ENCODE measurements at regions of chrX and their contacts with region 1.

Region 1: GRCh38 chrX:54529552-54530357 is at the start of gene GNL3L:
- DNase-seq: peak; percentile 86 to 92 (median 89)
- ATAC-seq: peak; percentile 90 to 97 (median 94)
- H3K4me3 ChIP-seq: peak within 1 kb of the TSS; percentile 39 to 97 (median 72)
- H3K27ac ChIP-seq: peak within 1 kb of the TSS; percentile 80 to 97 (median 84)
- H3K4me1 ChIP-seq: peaks cover 0 to 18% (median 4%) of the 10 kb centered on the region in 12 donors
- H3K27me3 ChIP-seq: peaks cover 0 to 4% (median 0%) of the 10 kb centered on the region in 9 donors
- CTCF ChIP-seq: no peak
- POLR2A ChIP-seq: peak in 1 of 2 donors; percentile 55
- total RNA-seq, gene GNL3L: 27.1 to 44.2 (median 37.4) TPM

Region 2: GRCh38 chrX:54134269-54134668 is 395.5 kb before region 1 on chrX:
- intact Hi-C with region 1: no loop called
- DNase-seq: no peak
- ATAC-seq: no peak
- H3K4me3 ChIP-seq: no peak overlapping the region
- H3K27ac ChIP-seq: no peak overlapping the region
- H3K4me1 ChIP-seq: no peaks in the 10 kb centered on the region
- H3K27me3 ChIP-seq: peaks cover 0 to 4% (median 0%) of the 10 kb centered on the region in 9 donors
- CTCF ChIP-seq: no peak
- POLR2A ChIP-seq: no peak

Region 3: GRCh38 chrX:54182864-54183608 is 346.7 kb before region 1 on chrX and contains the start of gene FAM120C:
- intact Hi-C with region 1: loop called in 1 of 10 experiments (anchors 10 kb)
- DNase-seq: peak; percentile 71 to 82 (median 78)
- ATAC-seq: peak; percentile 81 to 94 (median 91)
- H3K4me3 ChIP-seq: peak within 1 kb of the TSS; percentile 64 to 99 (median 82)
- H3K27ac ChIP-seq: peak within 1 kb of the TSS; percentile 78 to 94 (median 87)
- H3K4me1 ChIP-seq: peaks cover 0 to 38% (median 16%) of the 10 kb centered on the region in 12 donors
- H3K27me3 ChIP-seq: peaks cover 0 to 4% (median 0%) of the 10 kb centered on the region in 9 donors
- CTCF ChIP-seq: no peak
- POLR2A ChIP-seq: no peak
- total RNA-seq, gene FAM120C: 3.4 to 8.8 (median 5.9) TPM

Region 4: DNA sequence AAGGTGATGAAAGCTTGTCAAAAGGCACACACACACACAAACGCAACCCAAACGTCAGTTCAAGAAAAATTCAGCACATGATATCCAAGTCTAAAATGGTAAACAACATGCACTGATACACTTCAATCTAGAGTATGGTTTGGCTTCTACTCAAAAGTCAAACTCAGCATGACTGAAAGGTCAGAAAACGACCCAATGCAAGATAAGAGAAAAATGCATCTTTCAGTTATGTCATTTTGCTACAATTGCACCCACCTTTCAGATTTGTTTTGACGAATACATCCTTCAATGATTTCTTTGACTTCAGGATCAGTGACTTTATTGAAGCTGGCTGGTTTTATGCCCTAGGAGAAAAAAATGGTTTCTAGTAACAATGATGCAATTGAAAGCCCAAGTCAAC is 228.2 kb before region 1 on chrX:
- intact Hi-C with region 1: no loop called
- DNase-seq: no peak
- ATAC-seq: no peak
- H3K4me3 ChIP-seq: no peak overlapping the region
- H3K27ac ChIP-seq: no peak overlapping the region
- H3K4me1 ChIP-seq: no peaks in the 10 kb centered on the region
- H3K27me3 ChIP-seq: no peaks in the 10 kb centered on the region
- CTCF ChIP-seq: no peak
- POLR2A ChIP-seq: no peak

Region 5: GRCh38 chrX:54439967-54440871 is 89.5 kb before region 1 on chrX and contains the start of gene TSR2:
- intact Hi-C with region 1: loop called in 3 of 10 experiments (anchors 2 to 10 kb)
- DNase-seq: peak; percentile 80 to 88 (median 84)
- ATAC-seq: peak; percentile 96 to 100 (median 98)
- H3K4me3 ChIP-seq: peak within 1 kb of the TSS; percentile 49 to 95 (median 88)
- H3K27ac ChIP-seq: peak within 1 kb of the TSS in 9 of 12 donors; percentile 34 to 71 (median 51)
- H3K4me1 ChIP-seq: peaks cover 0 to 20% (median 9%) of the 10 kb centered on the region in 12 donors
- H3K27me3 ChIP-seq: peaks cover 0 to 9% (median 0%) of the 10 kb centered on the region in 9 donors
- CTCF ChIP-seq: peak in 2 of 12 donors; percentile 6 to 7
- POLR2A ChIP-seq: peak in 1 of 2 donors; percentile 41
- total RNA-seq, gene TSR2: 17.7 to 45.4 (median 34.6) TPM

Region 6: GRCh38 chrX:54482839-54483593 is 46.7 kb before region 1 on chrX:
- intact Hi-C with region 1: loop called in 4 of 10 experiments (anchors 2 to 10 kb)
- DNase-seq: no peak
- ATAC-seq: peak in 2 of 4 donors; percentile 34 to 35
- H3K4me3 ChIP-seq: peak overlapping the region in 2 of 12 donors; percentile 3 to 12
- H3K27ac ChIP-seq: peak overlapping the region in 11 of 12 donors; percentile 34 to 80 (median 64)
- H3K4me1 ChIP-seq: peaks cover 0 to 35% (median 7%) of the 10 kb centered on the region in 12 donors
- H3K27me3 ChIP-seq: peaks cover 0 to 9% (median 0%) of the 10 kb centered on the region in 9 donors
- CTCF ChIP-seq: no peak
- POLR2A ChIP-seq: no peak

Region 7: DNA sequence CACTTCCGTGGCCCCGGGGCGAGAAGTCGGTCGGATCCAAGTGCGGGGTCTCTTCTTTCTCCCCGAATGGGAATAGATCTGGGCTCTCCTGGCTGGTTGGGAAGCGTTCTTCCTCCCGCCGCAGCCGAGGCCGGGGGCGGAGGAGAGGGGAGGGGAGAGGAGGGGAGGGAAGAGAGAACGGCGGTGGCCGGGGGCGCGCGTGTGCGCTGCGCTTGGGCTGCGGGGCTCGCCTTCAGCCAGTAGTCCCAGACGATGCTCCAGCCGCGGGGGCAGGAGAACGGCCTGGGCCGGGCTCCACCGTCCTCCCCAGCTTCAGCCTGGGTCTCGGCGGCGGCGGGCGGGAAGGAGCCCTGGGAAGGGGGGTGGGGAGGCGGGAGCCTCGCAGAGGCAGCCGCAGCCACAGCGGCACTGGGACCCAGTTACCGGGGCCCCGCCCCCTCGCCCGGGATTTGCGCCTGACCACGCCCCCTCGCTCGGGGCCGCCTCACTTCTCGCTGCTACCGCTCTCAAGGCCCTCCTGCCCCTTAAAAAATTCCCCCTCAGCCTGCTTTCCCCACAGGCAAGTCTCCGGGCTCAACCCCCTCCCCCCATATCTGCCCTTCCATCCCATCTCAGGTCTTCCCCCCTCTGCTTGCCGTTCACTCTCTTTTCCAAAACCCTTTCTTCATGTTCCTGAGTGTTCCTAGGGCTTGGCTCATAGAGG is 33.8 kb before region 1 on chrX and contains the start of gene FGD1:
- intact Hi-C with region 1: loop called in 1 of 10 experiments (anchors 5 kb)
- DNase-seq: peak; percentile 71 to 82 (median 78)
- ATAC-seq: peak; percentile 83 to 94 (median 88)
- H3K4me3 ChIP-seq: peak within 1 kb of the TSS; percentile 51 to 87 (median 64)
- H3K27ac ChIP-seq: peak within 1 kb of the TSS; percentile 31 to 80 (median 72)
- H3K4me1 ChIP-seq: peaks cover 0 to 17% (median 0%) of the 10 kb centered on the region in 12 donors
- H3K27me3 ChIP-seq: peaks cover 0 to 24% (median 0%) of the 10 kb centered on the region in 9 donors
- CTCF ChIP-seq: no peak
- POLR2A ChIP-seq: no peak
- total RNA-seq, gene FGD1: 4.3 to 7.5 (median 6.7) TPM

Region 8: GRCh38 chrX:54728425-54728824 is 198.7 kb after region 1 on chrX:
- intact Hi-C with region 1: no loop called
- DNase-seq: no peak
- ATAC-seq: no peak
- H3K4me3 ChIP-seq: no peak overlapping the region
- H3K27ac ChIP-seq: no peak overlapping the region
- H3K4me1 ChIP-seq: no peaks in the 10 kb centered on the region
- H3K27me3 ChIP-seq: peaks cover 0 to 3% (median 0%) of the 10 kb centered on the region in 9 donors
- CTCF ChIP-seq: no peak
- POLR2A ChIP-seq: no peak

Measured in heart left ventricle (tissue), 16 donors.